ENCODE measurements at regions of chrX and their contacts with region 1.

Region 1: GRCh38 chrX:101415180-101416145 is 7.4 kb downstream of the HNRNPH2 start:
- DNase-seq: peak in 17 of 42 donors; percentile 8 to 69 (median 31)

Region 2: GRCh38 chrX:101550362-101550750 is 134.9 kb after region 1 on chrX and contains the start of gene ARMCX1:
- intact Hi-C with region 1: loop called (anchors 10 kb)
- DNase-seq: peak; percentile 60 to 90 (median 76)

Region 3: GRCh38 chrX:101799387-101799786 is 383.9 kb after region 1 on chrX:
- intact Hi-C with region 1: loop called (anchors 5 kb)
- DNase-seq: peak; percentile 48 to 94 (median 82)

Measured in head of caudate nucleus (tissue), 42 donors.